Calu3 (cell line): ENCODE measurements at regions of chr16 and their contacts with region 1.

Region 1: GRCh38 chr16:3003582-3004302 is 9.0 kb upstream of the CLDN9 start:
- DNase-seq: peak; percentile 99
- H3K4me3 Mint-ChIP-seq: peak overlapping the region; percentile 87
- H3K27ac Mint-ChIP-seq: peak overlapping the region; percentile 92
- H3K4me1 Mint-ChIP-seq: peaks cover 41% of the 10 kb centered on the region
- H3K27me3 Mint-ChIP-seq: no peaks in the 10 kb centered on the region
- CTCF ChIP-seq: peak; percentile 41

Region 2: GRCh38 chr16:3023669-3024478 is 20.1 kb after region 1 on chr16 and contains the starts of genes HCFC1R1 and THOC6:
- CTCF ChIA-PET with region 1: interaction called, 126 read pairs
- intact Hi-C with region 1: loop called (anchors 1 kb)
- DNase-seq: peak; percentile 97
- H3K4me3 Mint-ChIP-seq: peak within 1 kb of the TSS; percentile 80
- H3K27ac Mint-ChIP-seq: peak within 1 kb of the TSS; percentile 89
- H3K4me1 Mint-ChIP-seq: peaks cover 30% of the 10 kb centered on the region
- H3K27me3 Mint-ChIP-seq: no peaks in the 10 kb centered on the region
- CTCF ChIP-seq: no peak
- total RNA-seq, gene HCFC1R1: 61.1 and 75.4 TPM in 2 replicates
- total RNA-seq, gene THOC6: 50.8 and 54.4 TPM in 2 replicates